Left ventricle myocardium superior (tissue), 1 donor: ENCODE measurements at regions of chr10 and their contacts with region 1.

Region 1: DNA sequence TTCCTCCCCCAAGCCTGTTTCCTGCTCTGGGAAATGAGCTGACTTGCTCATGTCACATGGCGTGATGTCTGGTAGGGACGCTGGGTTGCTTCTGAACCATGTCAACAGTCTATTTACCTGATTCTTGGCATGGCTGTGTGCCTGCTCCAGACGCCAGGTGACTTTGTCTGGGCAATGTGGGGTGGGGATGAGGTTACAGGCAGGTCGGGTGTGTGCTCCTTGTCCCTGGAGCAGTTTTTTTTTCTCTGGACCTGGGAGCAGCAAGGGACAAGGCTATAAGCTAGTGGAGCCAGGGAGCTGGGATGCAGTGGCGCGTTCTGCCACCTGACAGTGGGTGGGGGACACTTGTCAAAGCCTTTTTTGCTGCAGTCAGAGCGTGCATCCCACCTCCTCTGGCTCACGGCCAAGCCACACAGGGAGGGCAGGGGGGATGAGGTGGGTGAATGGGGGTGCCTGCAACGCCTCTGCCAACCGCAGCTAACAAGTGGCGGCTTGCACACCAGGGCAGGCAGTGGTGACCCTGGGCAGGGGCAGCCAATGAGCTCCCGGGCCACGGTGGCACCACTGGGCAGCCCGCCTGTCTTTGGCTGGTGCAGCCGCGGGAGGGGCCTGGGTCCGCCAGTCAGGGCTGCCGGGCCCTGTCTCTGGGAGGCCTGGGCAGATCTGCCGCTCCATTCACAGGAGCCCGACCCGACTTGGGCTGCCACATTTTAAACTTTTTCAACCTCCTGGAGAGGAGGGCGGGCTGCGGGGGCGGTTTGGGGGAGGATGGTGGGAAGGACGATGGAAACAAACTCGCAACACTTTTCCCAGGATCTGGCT is 22.9 kb downstream of the DNAJB12 start:
- DNase-seq: peak; percentile 90
- ATAC-seq: peak; percentile 56

Region 2: GRCh38 chr10:71860243-71861029 is 471.4 kb before region 1 on chr10:
- intact Hi-C with region 1: no loop called
- DNase-seq: peak; percentile 94
- ATAC-seq: peak; percentile 97

Region 3: DNA sequence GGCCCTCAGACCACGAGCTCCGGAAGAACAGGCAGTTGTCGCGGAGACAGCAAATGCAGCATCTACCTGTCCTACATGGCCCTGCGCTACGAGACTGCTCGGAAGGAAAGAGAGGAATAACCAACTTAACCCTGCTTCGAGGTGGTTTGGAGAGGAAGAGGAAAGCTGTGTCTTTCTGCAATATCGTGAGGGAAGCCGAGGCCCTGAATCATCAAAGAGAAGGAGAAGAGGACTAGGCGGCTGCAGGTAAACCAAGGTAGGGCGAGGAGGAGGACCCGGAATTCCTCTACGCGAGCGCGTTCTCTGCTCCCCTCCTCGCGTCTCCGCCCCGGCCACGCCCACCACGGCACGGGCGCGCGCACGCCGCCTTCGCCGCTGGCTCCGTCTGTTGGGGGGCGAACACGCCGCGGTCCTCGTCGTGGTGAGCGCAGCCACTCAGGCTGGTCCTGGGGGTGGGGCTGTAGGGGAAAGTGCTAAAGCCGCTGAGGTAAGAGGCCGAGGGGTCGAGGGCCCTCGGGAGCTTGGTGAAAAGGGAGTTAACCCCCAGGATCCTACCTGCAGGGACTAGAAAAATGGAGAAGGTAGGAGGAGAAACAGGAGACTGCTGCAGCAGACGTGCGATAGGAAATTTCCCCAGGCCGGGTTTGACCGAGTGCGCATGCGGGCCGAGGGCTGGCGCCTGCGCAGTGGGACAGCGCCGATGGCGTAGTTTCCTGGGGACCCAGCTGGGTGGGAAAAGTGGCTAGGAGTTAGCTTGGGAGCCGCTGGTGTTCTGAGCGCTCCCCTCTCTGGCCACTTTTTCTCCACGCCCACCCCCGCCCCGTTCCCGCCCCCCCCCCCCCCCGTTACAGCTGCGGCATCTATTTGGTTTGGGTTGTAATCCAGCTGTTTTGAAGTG is 115.9 kb before region 1 on chr10 and contains the starts of genes ANAPC16 and ASCC1:
- intact Hi-C with region 1: loop called (anchors 10 kb)
- DNase-seq: peak; percentile 95
- ATAC-seq: peak; percentile 97
- total RNA-seq, gene ANAPC16: 260 TPM
- total RNA-seq, gene ASCC1: 34.7 TPM

Region 4: GRCh38 chr10:72297968-72298773 is 33.6 kb before region 1 on chr10:
- intact Hi-C with region 1: no loop called
- DNase-seq: peak; percentile 99
- ATAC-seq: peak; percentile 96